A673 (cell line): ENCODE measurements at regions of chr19 and their contacts with region 1.

Region 1: DNA sequence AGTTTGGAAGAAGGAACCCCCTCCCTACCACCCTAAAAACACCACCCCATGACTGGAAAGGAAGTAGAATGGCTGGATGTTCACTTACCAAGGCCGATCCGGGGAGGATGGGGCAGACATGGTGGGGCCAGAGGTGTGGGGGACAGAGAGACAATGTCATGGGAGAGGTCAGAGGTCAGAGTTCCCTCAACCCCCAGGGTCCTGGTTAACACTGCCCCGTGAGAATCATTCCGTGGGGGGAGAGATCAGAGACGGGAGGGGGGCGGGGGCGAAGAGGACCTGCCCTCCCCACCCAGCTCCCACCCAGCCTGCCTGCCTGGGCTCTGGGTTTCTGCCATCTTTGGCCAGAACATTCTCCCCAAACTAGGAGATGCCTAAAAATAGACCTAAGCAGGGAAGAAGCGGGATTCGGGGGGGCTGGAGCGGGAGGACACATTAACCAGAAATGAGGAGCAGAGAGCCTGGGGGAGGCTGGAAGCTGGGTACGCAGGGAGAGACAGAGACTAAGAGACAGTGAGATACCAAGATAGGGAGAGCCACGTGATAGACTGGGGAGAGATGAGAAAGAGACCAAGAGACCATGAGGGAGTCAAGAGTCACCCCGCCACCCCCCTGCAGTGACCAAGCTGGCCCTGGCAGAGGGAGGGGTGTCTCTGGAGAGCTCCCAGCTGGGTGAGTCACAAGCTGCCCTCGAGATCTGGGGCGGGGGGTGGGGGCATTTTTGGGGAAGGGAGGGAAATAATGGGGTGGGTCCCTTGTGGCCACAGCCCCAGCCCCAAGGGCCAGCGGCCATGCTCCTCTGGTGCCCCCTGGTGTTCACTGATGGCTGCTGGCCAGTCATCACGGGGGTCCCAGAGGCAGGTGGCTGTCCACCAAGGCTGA is 6.1 kb upstream of the KANK2 start:
- DNase-seq: peak; percentile 57
- H3K4me3 ChIP-seq: no peak overlapping the region
- H3K27ac ChIP-seq: peak overlapping the region; percentile 50
- H3K4me1 ChIP-seq: peaks cover 14% of the 10 kb centered on the region
- H3K27me3 ChIP-seq: no peaks in the 10 kb centered on the region
- CTCF ChIP-seq: peak; percentile 71

Region 2: GRCh38 chr19:10946964-10947657 is 256.3 kb before region 1 on chr19:
- CTCF ChIA-PET with region 1: no interaction called
- POLR2A ChIA-PET with region 1: no interaction called
- intact Hi-C with region 1: loop called (anchors 10 kb)
- DNase-seq: peak; percentile 82
- H3K4me3 ChIP-seq: no peak overlapping the region
- H3K27ac ChIP-seq: peak overlapping the region; percentile 38
- H3K4me1 ChIP-seq: peaks cover 25% of the 10 kb centered on the region
- H3K27me3 ChIP-seq: no peaks in the 10 kb centered on the region
- CTCF ChIP-seq: no peak

Region 3: GRCh38 chr19:11035441-11036377 is 167.7 kb before region 1 on chr19:
- CTCF ChIA-PET with region 1: no interaction called
- POLR2A ChIA-PET with region 1: no interaction called
- intact Hi-C with region 1: loop called (anchors 2 kb)
- DNase-seq: peak; percentile 94
- H3K4me3 ChIP-seq: no peak overlapping the region
- H3K27ac ChIP-seq: no peak overlapping the region
- H3K4me1 ChIP-seq: no peaks in the 10 kb centered on the region
- H3K27me3 ChIP-seq: no peaks in the 10 kb centered on the region
- CTCF ChIP-seq: peak; percentile 94

Region 4: GRCh38 chr19:11137542-11138384 is 65.7 kb before region 1 on chr19:
- CTCF ChIA-PET with region 1: interaction called, 3 read pairs
- POLR2A ChIA-PET with region 1: no interaction called
- intact Hi-C with region 1: loop called (anchors 1 kb)
- DNase-seq: peak; percentile 98
- H3K4me3 ChIP-seq: peak overlapping the region; percentile 23
- H3K27ac ChIP-seq: peak overlapping the region; percentile 81
- H3K4me1 ChIP-seq: peaks cover 35% of the 10 kb centered on the region
- H3K27me3 ChIP-seq: no peaks in the 10 kb centered on the region
- CTCF ChIP-seq: peak; percentile 86